ENCODE measurements at regions of chr12 and their contacts with region 1.

Region 1: DNA sequence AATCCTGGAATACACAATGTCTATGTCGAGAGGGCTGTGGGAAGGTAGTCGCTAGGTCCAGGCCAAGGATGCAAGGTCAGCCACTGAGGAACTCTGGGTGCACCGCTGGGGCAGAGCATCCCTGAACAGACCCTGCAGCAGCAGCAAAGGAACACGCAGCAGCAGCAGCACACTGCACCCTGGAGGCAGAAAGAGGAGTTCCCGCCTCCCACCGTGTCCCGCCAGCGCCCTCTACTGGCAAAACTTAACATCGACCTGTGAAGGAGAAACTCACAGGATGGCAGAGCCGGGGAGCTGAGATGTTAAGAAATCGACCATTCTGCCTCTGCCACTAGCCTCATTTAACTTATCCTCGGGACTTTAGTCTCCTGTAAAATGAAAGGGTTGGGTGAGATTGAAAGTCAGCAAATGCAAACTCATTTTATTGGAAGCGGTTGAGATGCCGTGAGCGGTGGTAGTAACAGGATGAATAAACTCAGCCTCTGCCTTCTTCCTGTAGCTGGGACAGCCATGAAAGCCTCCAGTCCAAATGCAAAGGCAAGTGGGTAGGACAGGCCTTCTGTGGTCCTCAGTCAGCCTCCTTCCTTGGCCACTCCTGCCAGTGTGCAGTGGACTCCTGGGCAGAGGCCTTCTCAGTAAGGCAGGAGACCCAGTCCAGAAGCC is 45.6 kb downstream of the STAB2 start:
- DNase-seq: peak; percentile 70
- H3K4me3 ChIP-seq: no peak overlapping the region
- H3K27ac ChIP-seq: no peak overlapping the region
- H3K4me1 ChIP-seq: no peaks in the 10 kb centered on the region
- H3K27me3 ChIP-seq: no peaks in the 10 kb centered on the region
- CTCF ChIP-seq: peak; percentile 99 to 100

Region 2: GRCh38 chr12:102948941-102949352 is 683.7 kb before region 1 on chr12:
- CTCF ChIA-PET with region 1: no interaction called
- dilution Hi-C with region 1: no loop called
- in situ Hi-C with region 1: no loop called
- intact Hi-C with region 1: loop called (anchors 1 kb)
- DNase-seq: no peak
- H3K4me3 ChIP-seq: no peak overlapping the region
- H3K27ac ChIP-seq: no peak overlapping the region
- H3K4me1 ChIP-seq: peaks cover 4% of the 10 kb centered on the region
- H3K27me3 ChIP-seq: peaks cover 25% of the 10 kb centered on the region
- CTCF ChIP-seq: peak; percentile 81 to 94

Region 3: GRCh38 chr12:103495479-103496456 is 136.9 kb before region 1 on chr12 and contains the start of gene C12orf42:
- CTCF ChIA-PET with region 1: interaction called, 5 read pairs
- dilution Hi-C with region 1: no loop called
- in situ Hi-C with region 1: no loop called
- intact Hi-C with region 1: loop called (anchors 1 kb)
- DNase-seq: peak; percentile 67
- H3K4me3 ChIP-seq: peak within 1 kb of the TSS; percentile 51 to 64 (median 53)
- H3K27ac ChIP-seq: peak within 1 kb of the TSS; percentile 55
- H3K4me1 ChIP-seq: peaks cover 39% of the 10 kb centered on the region
- H3K27me3 ChIP-seq: no peaks in the 10 kb centered on the region
- CTCF ChIP-seq: peak; percentile 88 to 90
- total RNA-seq, gene C12orf42: not detected

Region 4: GRCh38 chr12:103529306-103529705 is 103.4 kb before region 1 on chr12:
- CTCF ChIA-PET with region 1: no interaction called
- dilution Hi-C with region 1: no loop called
- in situ Hi-C with region 1: no loop called
- intact Hi-C with region 1: no loop called
- DNase-seq: peak; percentile 74
- H3K4me3 ChIP-seq: no peak overlapping the region
- H3K27ac ChIP-seq: no peak overlapping the region
- H3K4me1 ChIP-seq: peaks cover 4% of the 10 kb centered on the region
- H3K27me3 ChIP-seq: no peaks in the 10 kb centered on the region
- CTCF ChIP-seq: no peak

Region 5: DNA sequence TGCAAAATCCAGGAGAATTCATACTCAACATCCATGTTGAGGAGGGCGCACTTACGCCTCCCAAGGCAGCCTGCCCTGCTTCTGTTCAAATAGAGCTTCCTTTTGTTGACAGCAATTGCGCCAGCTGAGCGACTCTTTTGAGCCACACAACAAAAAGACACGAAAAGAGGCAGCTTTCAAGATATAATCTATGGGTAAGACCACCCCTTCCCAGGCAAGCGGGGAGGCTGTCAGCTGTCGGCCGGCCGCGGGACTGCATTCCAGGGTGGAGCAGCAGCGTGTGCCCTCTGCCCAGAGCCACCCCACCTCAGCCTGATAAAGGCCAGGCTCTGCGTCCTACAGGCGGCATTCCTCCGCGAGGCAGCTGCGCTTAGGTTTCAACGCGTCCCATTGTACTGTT is 61.4 kb before region 1 on chr12:
- CTCF ChIA-PET with region 1: interaction called, 3 read pairs
- dilution Hi-C with region 1: no loop called
- in situ Hi-C with region 1: no loop called
- intact Hi-C with region 1: loop called (anchors 1 kb)
- DNase-seq: no peak
- H3K4me3 ChIP-seq: no peak overlapping the region
- H3K27ac ChIP-seq: no peak overlapping the region
- H3K4me1 ChIP-seq: peaks cover 12% of the 10 kb centered on the region
- H3K27me3 ChIP-seq: no peaks in the 10 kb centered on the region
- CTCF ChIP-seq: no peak